CD4-positive, alpha-beta memory T cell (primary cell): ENCODE measurements at regions of chr17 and their contacts with region 1.

Region 1: DNA sequence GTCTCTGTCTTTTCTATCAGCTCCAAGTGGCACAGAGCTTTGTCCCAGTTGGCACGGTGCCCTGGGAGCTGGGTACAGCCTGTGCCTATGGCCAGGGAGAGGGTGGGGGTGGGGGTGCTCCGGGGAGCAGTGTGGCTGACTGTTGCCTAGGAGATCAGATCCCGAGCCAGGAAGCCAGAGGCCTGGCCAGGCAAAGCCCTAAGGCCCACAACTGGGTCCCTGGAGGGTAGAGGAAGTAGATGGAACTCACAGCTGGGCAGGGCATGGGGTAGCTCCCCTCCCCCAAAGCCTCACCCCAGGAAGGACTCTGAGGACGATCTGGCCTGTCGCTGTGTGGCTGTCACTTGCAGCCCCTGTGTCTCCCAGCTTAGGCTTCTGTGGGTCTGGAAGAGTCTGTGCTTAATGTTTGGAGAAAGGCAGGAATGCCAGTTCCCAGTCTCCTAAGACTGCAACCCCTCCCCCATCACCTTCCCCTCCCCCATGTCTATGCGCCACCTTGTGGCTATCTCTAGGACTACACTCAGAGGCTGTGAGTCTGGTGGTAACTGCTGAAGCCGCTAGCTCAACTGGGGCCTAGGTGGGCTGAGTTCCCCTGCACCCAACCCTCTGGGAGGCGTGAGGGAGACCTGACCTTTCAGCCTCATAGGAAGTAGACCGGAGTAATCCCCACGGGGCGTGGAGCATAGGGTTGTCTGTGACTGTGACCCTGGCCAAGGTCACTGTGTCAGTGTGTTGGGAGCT is 12.6 kb downstream of the THRA start:
- DNase-seq: peak; percentile 59 to 71 (median 63)
- H3K4me3 ChIP-seq: no peak overlapping the region
- H3K4me3 Mint-ChIP-seq: peak overlapping the region in 7 of 8 donors; percentile 17 to 80 (median 35)
- H3K27ac ChIP-seq: peak overlapping the region; percentile 8
- H3K27ac Mint-ChIP-seq: peak overlapping the region; percentile 60 to 93 (median 77)
- H3K4me1 ChIP-seq: peaks cover 38% of the 10 kb centered on the region
- H3K4me1 Mint-ChIP-seq: peaks cover 20 to 45% (median 33%) of the 10 kb centered on the region in 4 donors
- H3K27me3 ChIP-seq: no peaks in the 10 kb centered on the region
- H3K27me3 Mint-ChIP-seq: no peaks in the 10 kb centered on the region

Region 2: DNA sequence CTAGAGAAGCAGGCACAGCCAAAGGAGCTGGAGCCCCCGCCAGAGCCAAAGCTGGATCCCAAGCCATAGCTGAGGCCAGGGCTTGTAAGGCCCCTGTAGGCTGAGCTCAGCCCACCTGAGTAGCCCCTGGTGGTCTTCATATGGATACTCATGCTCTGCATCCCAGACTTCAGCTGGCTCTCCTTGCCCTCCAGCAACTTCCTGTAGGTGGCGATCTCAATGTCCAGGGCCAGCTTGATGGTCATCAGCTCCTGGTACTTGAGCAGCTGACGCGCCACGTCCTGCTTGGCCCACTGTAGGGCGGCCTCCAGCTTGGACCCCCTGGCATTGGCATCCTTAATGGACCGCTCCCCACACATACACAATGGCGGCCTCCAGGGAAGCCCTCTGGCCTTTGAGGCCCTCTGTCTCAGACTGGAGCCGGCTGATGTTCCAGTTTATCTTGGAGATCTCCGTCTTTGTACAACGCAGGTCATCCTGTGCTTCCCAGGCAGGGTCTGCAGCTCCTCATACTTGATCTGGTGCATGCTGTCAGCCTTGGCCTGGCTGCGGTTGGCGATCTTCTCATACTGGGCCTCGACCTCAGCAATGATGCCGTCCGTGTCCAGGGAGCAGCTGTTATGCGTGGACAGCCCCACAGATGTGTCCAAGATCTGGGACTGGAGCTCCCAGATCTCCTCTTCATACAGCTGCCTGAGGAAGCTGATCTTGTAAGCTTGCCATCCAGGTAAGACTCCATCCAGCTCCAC is 240.2 kb before region 1 on chr17:
- CTCF ChIA-PET with region 1: no interaction called
- POLR2A ChIA-PET with region 1: no interaction called
- intact Hi-C with region 1: no loop called
- DNase-seq: no peak
- H3K4me3 ChIP-seq: no peak overlapping the region
- H3K4me3 Mint-ChIP-seq: no peak overlapping the region
- H3K27ac ChIP-seq: no peak overlapping the region
- H3K27ac Mint-ChIP-seq: peak overlapping the region in 1 of 7 donors; percentile 88
- H3K4me1 ChIP-seq: no peaks in the 10 kb centered on the region
- H3K4me1 Mint-ChIP-seq: peaks cover 13 to 32% (median 21%) of the 10 kb centered on the region in 4 donors
- H3K27me3 ChIP-seq: no peaks in the 10 kb centered on the region
- H3K27me3 Mint-ChIP-seq: no peaks in the 10 kb centered on the region

Region 3: DNA sequence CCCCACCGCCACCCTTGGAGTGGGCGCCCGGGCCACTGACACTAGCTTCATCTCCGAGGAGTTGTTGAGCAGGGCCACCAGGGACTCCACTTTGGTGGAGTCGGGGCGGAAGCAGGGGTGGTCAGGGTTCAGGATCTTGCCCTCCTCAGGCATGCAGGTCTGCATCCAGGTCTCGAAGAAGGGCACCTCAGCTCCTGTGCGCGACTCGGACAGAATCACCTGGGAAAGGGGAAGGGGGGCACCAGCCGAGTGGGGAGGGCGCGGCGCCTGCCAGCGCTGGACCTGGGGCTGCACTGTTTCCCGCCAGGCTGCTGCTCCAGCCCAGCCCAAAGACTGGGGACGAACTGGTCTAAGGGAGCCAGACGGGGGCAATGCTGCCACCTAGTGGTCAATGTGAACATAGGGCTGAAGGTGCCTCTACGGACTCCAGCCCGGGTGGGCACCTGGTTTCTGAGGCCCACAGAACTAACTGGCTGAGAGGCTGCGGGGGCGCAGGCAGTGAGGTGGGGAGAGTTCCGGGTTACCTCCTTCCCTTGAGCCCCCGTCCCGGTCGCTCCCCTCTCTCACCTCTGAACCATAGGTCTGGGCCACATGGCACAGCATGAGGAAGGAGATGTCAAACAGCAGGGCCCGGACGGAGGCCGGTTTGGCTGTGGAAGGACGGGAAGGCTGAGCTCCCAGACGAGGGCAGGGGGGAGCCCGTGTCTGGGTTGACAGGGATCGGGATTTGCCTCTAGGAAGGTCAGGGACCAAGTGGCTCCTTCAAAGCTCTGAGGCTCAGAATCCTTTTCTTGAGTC is 48.4 kb before region 1 on chr17:
- CTCF ChIA-PET with region 1: interaction called, 20 read pairs
- POLR2A ChIA-PET with region 1: no interaction called
- intact Hi-C with region 1: no loop called
- DNase-seq: peak; percentile 67 to 78 (median 69)
- H3K4me3 ChIP-seq: no peak overlapping the region
- H3K4me3 Mint-ChIP-seq: peak overlapping the region in 3 of 8 donors; percentile 46 to 75 (median 56)
- H3K27ac ChIP-seq: no peak overlapping the region
- H3K27ac Mint-ChIP-seq: peak overlapping the region in 4 of 7 donors; percentile 15 to 52 (median 32)
- H3K4me1 ChIP-seq: peaks cover 25% of the 10 kb centered on the region
- H3K4me1 Mint-ChIP-seq: peaks cover 19 to 24% (median 21%) of the 10 kb centered on the region in 4 donors
- H3K27me3 ChIP-seq: no peaks in the 10 kb centered on the region
- H3K27me3 Mint-ChIP-seq: no peaks in the 10 kb centered on the region

Region 4: DNA sequence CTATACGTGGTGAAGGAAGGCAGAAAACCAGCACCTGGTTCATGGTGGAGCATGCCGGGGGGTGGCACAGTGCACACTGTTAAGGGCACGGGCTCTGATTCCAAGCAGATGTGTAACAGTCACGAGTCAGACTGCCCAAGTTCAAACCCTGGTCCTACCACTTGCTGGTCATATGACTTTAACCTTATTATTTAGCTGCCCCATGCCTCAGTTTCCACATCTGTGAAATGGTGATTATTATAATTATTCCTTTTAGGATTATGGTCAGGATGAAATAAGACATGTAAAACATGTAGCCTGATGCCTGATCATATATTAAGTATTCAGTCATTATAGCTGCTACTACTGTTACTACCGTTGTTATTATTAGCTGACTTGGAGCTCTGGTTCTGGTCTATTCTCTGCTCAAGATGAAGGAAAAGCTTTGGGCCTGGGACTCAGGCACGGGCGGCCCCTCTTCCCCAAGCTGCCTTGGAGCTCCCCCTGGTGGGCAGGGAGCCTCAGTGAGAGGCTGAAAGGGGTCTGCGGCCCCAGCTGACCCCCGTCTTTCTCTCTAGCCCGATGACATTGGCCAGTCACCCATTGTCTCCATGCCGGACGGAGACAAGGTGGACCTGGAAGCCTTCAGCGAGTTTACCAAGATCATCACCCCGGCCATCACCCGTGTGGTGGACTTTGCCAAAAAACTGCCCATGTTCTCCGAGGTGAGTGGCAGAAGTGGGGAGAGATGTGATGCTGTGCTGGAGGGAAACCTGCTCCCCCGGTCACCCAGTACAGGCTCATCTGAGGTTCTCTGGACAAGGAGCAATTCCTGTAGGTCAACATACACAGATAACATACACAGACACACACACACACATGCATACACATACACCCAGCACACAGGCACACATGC is 11.0 kb after region 1 on chr17:
- CTCF ChIA-PET with region 1: interaction called, 54 read pairs
- POLR2A ChIA-PET with region 1: interaction called, 304 read pairs
- intact Hi-C with region 1: no loop called
- DNase-seq: peak in 3 of 5 donors; percentile 40 to 52 (median 50)
- H3K4me3 ChIP-seq: no peak overlapping the region
- H3K4me3 Mint-ChIP-seq: no peak overlapping the region
- H3K27ac ChIP-seq: no peak overlapping the region
- H3K27ac Mint-ChIP-seq: peak overlapping the region in 4 of 7 donors; percentile 1 to 77 (median 60)
- H3K4me1 ChIP-seq: peaks cover 5% of the 10 kb centered on the region
- H3K4me1 Mint-ChIP-seq: peaks cover 6 to 23% (median 10%) of the 10 kb centered on the region in 4 donors
- H3K27me3 ChIP-seq: no peaks in the 10 kb centered on the region
- H3K27me3 Mint-ChIP-seq: no peaks in the 10 kb centered on the region

Region 5: GRCh38 chr17:40098846-40099618 is 23.7 kb after region 1 on chr17:
- CTCF ChIA-PET with region 1: interaction called, 543 read pairs
- POLR2A ChIA-PET with region 1: interaction called, 304 read pairs
- intact Hi-C with region 1: loop called (anchors 1 kb)
- DNase-seq: peak; percentile 98 to 100 (median 99)
- H3K4me3 ChIP-seq: peak overlapping the region; percentile 73 to 96
- H3K4me3 Mint-ChIP-seq: peak overlapping the region; percentile 80 to 99 (median 98)
- H3K27ac ChIP-seq: peak overlapping the region; percentile 92
- H3K27ac Mint-ChIP-seq: peak overlapping the region; percentile 86 to 99 (median 94)
- H3K4me1 ChIP-seq: peaks cover 90% of the 10 kb centered on the region
- H3K4me1 Mint-ChIP-seq: peaks cover 61 to 95% (median 79%) of the 10 kb centered on the region in 4 donors
- H3K27me3 ChIP-seq: no peaks in the 10 kb centered on the region
- H3K27me3 Mint-ChIP-seq: no peaks in the 10 kb centered on the region

Region 6: DNA sequence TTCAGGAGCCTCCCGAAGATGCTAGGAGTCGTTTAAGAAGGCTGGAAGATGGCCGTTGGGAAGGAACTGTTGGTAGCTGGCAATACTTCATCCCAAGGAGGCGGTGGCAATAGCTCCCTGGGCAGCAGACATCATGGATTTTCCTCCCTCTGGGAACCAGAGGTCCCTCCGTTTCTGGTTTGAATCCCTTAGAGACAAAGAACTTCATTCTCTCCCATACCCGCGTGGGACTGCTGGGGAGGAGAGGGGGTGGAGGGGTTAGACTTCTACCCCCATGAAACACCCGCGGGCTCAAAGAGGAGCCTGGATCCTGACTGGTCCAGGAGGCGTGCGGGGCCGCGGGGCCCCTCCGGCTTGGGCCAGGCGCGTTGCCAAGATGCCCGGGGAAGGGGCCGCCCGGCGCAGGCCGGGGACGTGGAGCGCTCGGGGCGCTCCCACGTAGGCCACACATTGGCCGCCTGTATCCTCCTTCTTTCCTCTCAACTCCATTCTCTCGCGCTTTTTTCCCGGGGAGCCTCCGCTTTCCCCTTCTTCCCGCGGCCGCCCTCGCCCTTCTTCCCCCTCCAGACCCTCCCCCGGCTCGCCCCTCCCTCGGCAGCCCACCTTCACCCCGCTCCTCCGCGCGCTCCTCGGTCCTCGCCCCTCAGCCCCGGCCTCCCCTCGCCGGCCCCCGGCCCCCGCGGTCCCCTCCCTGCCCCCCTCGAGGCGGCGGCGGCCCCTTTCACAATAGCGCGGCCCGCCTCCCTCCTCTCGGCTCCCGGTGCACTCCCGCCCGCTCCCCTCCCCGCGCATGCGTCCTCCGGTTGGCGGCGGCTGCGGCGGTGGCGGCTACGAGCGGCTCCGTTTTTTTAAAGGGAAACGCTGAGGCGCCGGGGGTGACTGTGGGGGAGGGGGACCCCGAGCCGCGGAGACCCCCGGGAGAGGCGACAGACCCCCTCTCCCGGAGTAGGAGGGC is 46.1 kb after region 1 on chr17 and contains the start of gene MSL1:
- CTCF ChIA-PET with region 1: interaction called, 543 read pairs
- POLR2A ChIA-PET with region 1: interaction called, 7 read pairs
- intact Hi-C with region 1: no loop called
- DNase-seq: peak; percentile 82 to 91 (median 85)
- H3K4me3 ChIP-seq: peak within 1 kb of the TSS; percentile 86 to 98
- H3K4me3 Mint-ChIP-seq: peak within 1 kb of the TSS; percentile 76 to 96 (median 84)
- H3K27ac ChIP-seq: peak within 1 kb of the TSS; percentile 78
- H3K27ac Mint-ChIP-seq: peak within 1 kb of the TSS; percentile 78 to 92 (median 83)
- H3K4me1 ChIP-seq: peaks cover 35% of the 10 kb centered on the region
- H3K4me1 Mint-ChIP-seq: peaks cover 17 to 47% (median 31%) of the 10 kb centered on the region in 4 donors
- H3K27me3 ChIP-seq: no peaks in the 10 kb centered on the region
- H3K27me3 Mint-ChIP-seq: no peaks in the 10 kb centered on the region
- total RNA-seq, gene MSL1: 130 to 133 TPM

Region 7: DNA sequence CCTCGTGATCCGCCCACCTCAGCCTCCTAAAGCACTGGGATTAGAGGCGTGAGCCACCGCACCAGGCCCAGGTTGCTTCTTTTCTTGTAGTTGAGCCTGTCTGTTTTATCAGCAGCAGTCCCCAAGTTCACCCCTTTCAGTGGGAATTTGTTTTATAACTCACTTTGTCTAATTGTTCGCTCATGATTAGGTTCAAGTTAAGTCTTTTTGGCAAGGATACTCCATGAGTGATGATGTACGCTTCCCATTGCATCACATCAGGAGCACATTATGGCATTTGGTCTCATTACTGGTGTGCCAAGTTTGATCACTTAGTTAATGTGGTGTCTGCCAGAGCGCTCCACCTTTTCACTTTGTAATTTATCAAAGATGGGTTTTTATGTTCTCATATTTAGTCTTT is 303.6 kb after region 1 on chr17:
- CTCF ChIA-PET with region 1: no interaction called
- POLR2A ChIA-PET with region 1: no interaction called
- intact Hi-C with region 1: no loop called
- DNase-seq: no peak
- H3K4me3 ChIP-seq: no peak overlapping the region
- H3K4me3 Mint-ChIP-seq: no peak overlapping the region
- H3K27ac ChIP-seq: no peak overlapping the region
- H3K27ac Mint-ChIP-seq: no peak overlapping the region
- H3K4me1 ChIP-seq: no peaks in the 10 kb centered on the region
- H3K4me1 Mint-ChIP-seq: peaks cover 2 to 7% (median 4%) of the 10 kb centered on the region in 4 donors
- H3K27me3 ChIP-seq: no peaks in the 10 kb centered on the region
- H3K27me3 Mint-ChIP-seq: peaks cover 2 to 5% of the 10 kb centered on the region in 2 donors

Region 8: GRCh38 chr17:40598663-40599467 is 523.5 kb after region 1 on chr17:
- CTCF ChIA-PET with region 1: no interaction called
- POLR2A ChIA-PET with region 1: no interaction called
- intact Hi-C with region 1: no loop called
- DNase-seq: peak; percentile 72 to 92 (median 77)
- H3K4me3 ChIP-seq: no peak overlapping the region
- H3K4me3 Mint-ChIP-seq: peak overlapping the region; percentile 67 to 89 (median 84)
- H3K27ac ChIP-seq: peak overlapping the region; percentile 92
- H3K27ac Mint-ChIP-seq: peak overlapping the region; percentile 94 to 100 (median 99)
- H3K4me1 ChIP-seq: peaks cover 88% of the 10 kb centered on the region
- H3K4me1 Mint-ChIP-seq: peaks cover 63 to 95% (median 78%) of the 10 kb centered on the region in 4 donors
- H3K27me3 ChIP-seq: no peaks in the 10 kb centered on the region
- H3K27me3 Mint-ChIP-seq: no peaks in the 10 kb centered on the region